ENCODE measurements at regions of chr1 and their contacts with region 1.

Region 1: DNA sequence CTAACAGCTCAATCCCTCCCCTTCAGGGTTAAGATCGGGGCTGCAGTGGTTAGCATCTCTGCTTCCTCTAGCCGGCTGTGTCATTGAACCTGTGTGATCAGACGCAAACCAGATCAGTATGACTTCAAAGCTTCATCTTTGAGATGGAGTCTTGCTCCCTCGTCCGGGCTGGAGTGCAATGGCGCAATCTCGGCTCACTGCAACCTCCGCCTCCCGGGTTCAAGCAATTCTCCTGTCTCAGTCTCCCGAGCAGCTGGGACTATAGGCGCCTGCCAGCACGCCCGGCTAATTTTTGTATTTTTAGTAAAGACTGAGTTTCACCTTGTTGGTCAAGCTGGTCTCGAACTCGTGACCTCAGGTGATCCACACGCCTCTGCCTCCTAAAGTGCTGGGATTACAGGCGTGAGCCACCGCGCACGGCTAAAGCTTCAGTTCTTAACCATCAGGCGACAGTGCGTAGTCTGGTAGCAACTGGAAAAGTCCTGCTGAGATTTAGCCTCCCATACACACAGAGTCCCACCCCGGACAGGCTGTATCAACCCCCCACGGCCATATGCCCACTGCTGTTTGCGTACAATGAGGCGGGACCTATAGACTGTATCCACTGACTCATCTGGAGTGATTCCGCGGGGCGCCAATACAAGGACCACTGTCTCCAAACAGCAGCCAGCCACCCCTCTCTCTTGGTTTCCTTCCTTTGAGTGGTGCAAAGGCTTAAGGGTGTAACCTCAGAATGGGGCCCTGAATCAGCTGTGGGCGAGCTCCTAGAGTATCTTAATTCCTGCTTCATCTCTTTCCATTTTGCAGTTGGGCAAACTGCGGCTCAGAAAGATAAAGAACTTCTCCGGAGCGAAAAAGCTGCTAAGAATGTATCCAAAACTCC is 23.3 kb downstream of the CELA3A start:
- DNase-seq: no peak
- H3K4me3 ChIP-seq: peak overlapping the region; percentile 65 to 98
- H3K27ac ChIP-seq: peak overlapping the region; percentile 88
- H3K4me1 ChIP-seq: peaks cover 17% of the 10 kb centered on the region
- H3K27me3 ChIP-seq: no peaks in the 10 kb centered on the region
- CTCF ChIP-seq: no peak
- POLR2A ChIP-seq: no peak

Region 2: DNA sequence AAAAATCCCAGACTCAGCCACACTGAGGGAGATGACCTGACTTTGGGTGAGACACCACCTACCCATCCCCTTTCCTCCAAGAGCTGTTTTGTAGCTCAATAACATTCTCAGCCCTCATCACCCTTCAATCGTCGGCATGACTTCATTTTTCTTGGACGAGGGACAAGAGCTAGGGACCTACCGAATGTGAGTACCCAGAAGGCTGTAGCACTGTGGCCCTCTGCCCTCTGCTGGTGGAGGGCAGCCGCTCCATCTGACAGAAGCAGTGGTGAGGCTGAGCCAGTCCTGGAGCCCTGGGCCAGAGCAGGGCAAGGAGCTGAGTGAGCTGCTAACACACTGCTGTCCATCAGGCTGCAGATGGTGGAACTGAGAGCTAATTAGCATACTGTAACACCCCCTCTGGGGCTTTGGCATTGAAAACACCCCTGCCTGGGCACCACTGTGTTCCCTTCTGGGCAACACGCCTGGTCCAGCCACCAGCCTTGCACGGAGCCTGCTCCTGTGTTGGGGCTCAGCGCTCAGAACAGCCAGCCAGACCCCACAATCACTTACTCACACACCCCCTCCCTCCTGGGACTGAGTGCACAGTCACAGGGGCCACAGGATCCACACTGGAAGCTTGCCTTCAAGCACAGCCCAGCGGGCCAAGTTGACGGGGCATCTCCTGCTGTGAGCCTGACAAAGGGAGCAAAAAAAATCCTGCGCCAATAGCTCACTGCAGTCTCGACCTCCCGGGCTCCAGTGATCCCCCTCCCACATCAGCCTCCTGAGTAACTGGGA is 533.8 kb before region 1 on chr1:
- intact Hi-C with region 1: loop called (anchors 5 kb)
- DNase-seq: no peak
- H3K4me3 ChIP-seq: no peak overlapping the region
- H3K27ac ChIP-seq: no peak overlapping the region
- H3K4me1 ChIP-seq: no peaks in the 10 kb centered on the region
- H3K27me3 ChIP-seq: no peaks in the 10 kb centered on the region
- CTCF ChIP-seq: no peak
- POLR2A ChIP-seq: no peak

Region 3: DNA sequence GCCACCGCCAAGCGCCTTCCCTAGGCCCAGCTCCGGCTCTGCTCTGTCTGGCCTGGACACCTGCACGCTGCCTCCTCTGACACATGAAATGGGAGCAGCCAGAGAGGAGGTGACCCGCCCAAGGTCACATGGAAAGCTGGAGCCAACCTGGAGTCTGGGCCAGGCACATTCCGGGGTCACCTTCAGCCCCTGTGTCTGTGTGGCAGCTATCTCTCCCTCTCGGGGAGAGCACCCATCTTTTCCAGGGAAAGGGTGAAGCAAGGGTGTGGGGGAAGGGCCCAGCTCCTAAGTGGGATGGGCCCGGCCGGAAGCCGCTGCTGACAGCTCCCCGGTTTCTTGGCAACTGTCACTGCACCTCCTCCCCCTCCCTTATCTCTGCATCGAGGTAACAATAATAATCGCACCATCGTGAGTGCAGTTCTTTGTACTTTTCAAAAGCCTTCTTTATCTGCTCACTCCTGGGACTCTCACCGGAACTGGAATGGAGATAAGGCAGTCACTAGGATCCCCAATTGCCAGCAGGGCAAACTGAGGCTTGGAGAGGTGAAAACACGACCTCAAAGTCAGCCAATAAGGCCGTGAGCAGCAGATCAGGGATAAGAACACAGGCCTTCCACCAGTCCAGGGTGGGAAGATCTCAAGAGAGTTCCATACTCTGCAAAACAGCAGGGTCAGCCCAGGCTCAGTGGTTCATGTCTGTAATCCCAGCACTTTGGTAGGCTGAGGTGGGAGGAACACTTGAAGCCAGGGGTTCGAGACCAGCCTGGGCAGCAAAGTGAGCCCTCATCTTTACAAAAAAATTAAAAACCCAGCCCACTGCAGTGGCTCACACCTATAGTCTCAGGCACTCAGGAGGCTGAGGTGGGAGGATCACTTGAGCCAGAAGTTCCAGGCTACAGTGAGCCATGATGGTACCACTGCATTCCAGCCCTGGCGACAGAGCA is 392.5 kb before region 1 on chr1:
- intact Hi-C with region 1: no loop called
- DNase-seq: no peak
- H3K4me3 ChIP-seq: no peak overlapping the region
- H3K27ac ChIP-seq: no peak overlapping the region
- H3K4me1 ChIP-seq: no peaks in the 10 kb centered on the region
- H3K27me3 ChIP-seq: no peaks in the 10 kb centered on the region
- CTCF ChIP-seq: no peak
- POLR2A ChIP-seq: no peak

Region 4: GRCh38 chr1:22075718-22076117 is 51.0 kb after region 1 on chr1:
- intact Hi-C with region 1: no loop called
- DNase-seq: no peak
- H3K4me3 ChIP-seq: no peak overlapping the region
- H3K27ac ChIP-seq: no peak overlapping the region
- H3K4me1 ChIP-seq: peaks cover 80% of the 10 kb centered on the region
- H3K27me3 ChIP-seq: no peaks in the 10 kb centered on the region
- CTCF ChIP-seq: no peak
- POLR2A ChIP-seq: no peak

Region 5: DNA sequence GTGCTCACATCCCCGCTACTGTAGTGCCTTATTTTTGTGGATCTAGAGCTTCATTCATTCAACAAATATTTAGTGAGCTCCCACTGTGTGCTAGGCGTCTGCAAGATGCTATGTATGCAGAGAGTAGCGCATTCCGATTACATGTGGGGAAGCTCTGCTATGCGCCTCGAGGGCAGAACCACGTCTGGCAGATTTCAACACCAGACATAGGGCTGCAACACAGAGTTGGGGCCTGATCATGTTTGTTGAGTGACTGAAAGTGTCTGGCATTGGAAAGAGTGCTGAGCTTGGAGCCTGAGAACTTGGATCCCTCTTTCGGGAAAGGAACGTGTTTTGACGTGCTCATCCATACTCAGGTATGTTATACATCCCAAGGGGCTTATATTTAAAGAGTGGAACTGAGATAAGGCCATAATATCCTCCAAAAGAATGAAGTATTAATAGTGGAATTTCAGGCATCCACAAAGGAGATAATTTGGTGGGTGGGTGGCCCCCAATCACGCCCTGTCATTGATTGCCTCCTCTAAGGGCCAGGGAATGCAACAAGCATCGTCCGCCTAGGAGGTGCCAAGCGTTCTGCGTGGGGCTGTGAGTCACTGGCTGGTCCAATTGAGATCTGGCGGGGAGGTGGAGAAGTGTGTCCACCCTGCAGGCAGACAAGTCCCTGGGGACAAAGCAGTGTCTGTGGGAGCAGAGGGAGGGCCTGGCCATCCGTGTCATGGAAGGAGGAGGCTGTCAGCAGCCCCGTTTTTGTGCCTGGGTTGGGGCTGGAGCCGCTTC is 364.1 kb after region 1 on chr1:
- intact Hi-C with region 1: no loop called
- DNase-seq: no peak
- H3K4me3 ChIP-seq: no peak overlapping the region
- H3K27ac ChIP-seq: no peak overlapping the region
- H3K4me1 ChIP-seq: no peaks in the 10 kb centered on the region
- H3K27me3 ChIP-seq: no peaks in the 10 kb centered on the region
- CTCF ChIP-seq: no peak
- POLR2A ChIP-seq: no peak